Activated CD8-positive, alpha-beta T cell treated with anti-CD3 and anti-CD28 coated beads for 36 hours (primary cell): ENCODE measurements at regions of chr12 and their contacts with region 1.

Region 1: GRCh38 chr12:49358483-49359141 is 8.7 kb upstream of the SPATS2 start:
- DNase-seq: peak; percentile 80
- ATAC-seq: peak; percentile 98
- H3K4me3 Mint-ChIP-seq: no peak overlapping the region
- H3K27ac Mint-ChIP-seq: no peak overlapping the region
- H3K4me1 Mint-ChIP-seq: peaks cover 2% of the 10 kb centered on the region
- H3K27me3 Mint-ChIP-seq: peaks cover 12% of the 10 kb centered on the region
- CTCF ChIP-seq: peak; percentile 90

Region 2: GRCh38 chr12:49144384-49144783 is 214.2 kb before region 1 on chr12:
- CTCF ChIA-PET with region 1: no interaction called
- POLR2A ChIA-PET with region 1: no interaction called
- intact Hi-C with region 1: no loop called
- DNase-seq: no peak
- ATAC-seq: no peak
- H3K4me3 Mint-ChIP-seq: no peak overlapping the region
- H3K27ac Mint-ChIP-seq: no peak overlapping the region
- H3K4me1 Mint-ChIP-seq: peaks cover 3% of the 10 kb centered on the region
- H3K27me3 Mint-ChIP-seq: no peaks in the 10 kb centered on the region
- CTCF ChIP-seq: no peak

Region 3: DNA sequence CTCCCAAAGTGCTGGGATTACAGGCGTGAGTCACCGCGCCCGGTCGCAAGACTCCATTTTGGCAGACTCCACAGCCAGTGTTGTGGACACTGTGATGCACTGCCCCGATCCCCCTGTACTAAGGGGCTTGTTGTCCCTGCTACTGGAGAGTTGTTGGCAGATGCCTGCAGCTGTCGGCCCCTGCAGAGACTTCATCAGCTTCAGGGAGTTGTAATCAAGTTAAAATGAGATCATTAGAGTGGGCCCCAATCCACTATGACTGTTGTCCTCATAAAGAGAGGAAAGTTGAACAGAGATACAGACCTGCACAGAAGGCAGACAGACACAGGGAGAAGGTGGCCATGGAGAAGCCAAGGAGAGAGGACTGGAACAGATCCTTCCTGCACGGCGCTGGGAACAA is 146.0 kb before region 1 on chr12:
- CTCF ChIA-PET with region 1: no interaction called
- POLR2A ChIA-PET with region 1: no interaction called
- intact Hi-C with region 1: no loop called
- DNase-seq: no peak
- ATAC-seq: no peak
- H3K4me3 Mint-ChIP-seq: no peak overlapping the region
- H3K27ac Mint-ChIP-seq: no peak overlapping the region
- H3K4me1 Mint-ChIP-seq: no peaks in the 10 kb centered on the region
- H3K27me3 Mint-ChIP-seq: peaks cover 2% of the 10 kb centered on the region
- CTCF ChIP-seq: no peak

Region 4: DNA sequence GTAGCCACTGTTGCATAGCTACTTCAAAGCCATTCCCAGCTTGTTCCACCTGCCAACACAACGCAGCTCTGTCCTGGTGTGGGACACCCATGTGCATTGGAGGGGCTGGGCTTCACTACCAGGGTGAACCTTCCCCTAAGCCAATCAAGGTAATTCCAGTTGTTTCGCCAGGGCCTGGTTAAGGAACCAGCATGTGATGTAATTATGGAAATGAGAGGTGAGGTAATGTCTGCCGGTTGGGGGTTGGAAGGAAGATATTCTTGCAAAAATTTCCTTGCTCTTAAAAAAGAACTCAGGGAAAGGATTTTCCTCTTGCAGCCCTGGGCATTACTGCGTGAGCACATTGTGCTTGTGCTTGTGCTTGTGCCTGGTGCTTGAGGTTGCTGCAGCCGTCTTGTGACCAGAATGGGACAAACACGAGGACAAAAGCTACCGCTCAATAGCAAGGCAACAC is 78.9 kb before region 1 on chr12:
- CTCF ChIA-PET with region 1: interaction called, 11 read pairs
- POLR2A ChIA-PET with region 1: no interaction called
- intact Hi-C with region 1: no loop called
- DNase-seq: no peak
- ATAC-seq: no peak
- H3K4me3 Mint-ChIP-seq: no peak overlapping the region
- H3K27ac Mint-ChIP-seq: no peak overlapping the region
- H3K4me1 Mint-ChIP-seq: no peaks in the 10 kb centered on the region
- H3K27me3 Mint-ChIP-seq: peaks cover 9% of the 10 kb centered on the region
- CTCF ChIP-seq: no peak

Region 5: GRCh38 chr12:49331380-49332222 is 27.0 kb before region 1 on chr12:
- CTCF ChIA-PET with region 1: interaction called, 16 read pairs
- POLR2A ChIA-PET with region 1: no interaction called
- intact Hi-C with region 1: no loop called
- DNase-seq: peak; percentile 36
- ATAC-seq: peak; percentile 58
- H3K4me3 Mint-ChIP-seq: no peak overlapping the region
- H3K27ac Mint-ChIP-seq: no peak overlapping the region
- H3K4me1 Mint-ChIP-seq: peaks cover 3% of the 10 kb centered on the region
- H3K27me3 Mint-ChIP-seq: peaks cover 36% of the 10 kb centered on the region
- CTCF ChIP-seq: peak; percentile 56

Region 6: GRCh38 chr12:49347384-49348237 is 11.0 kb before region 1 on chr12:
- CTCF ChIA-PET with region 1: interaction called, 114 read pairs
- POLR2A ChIA-PET with region 1: no interaction called
- intact Hi-C with region 1: no loop called
- DNase-seq: peak; percentile 75
- ATAC-seq: peak; percentile 59
- H3K4me3 Mint-ChIP-seq: peak overlapping the region; percentile 65
- H3K27ac Mint-ChIP-seq: no peak overlapping the region
- H3K4me1 Mint-ChIP-seq: peaks cover 38% of the 10 kb centered on the region
- H3K27me3 Mint-ChIP-seq: peaks cover 62% of the 10 kb centered on the region
- CTCF ChIP-seq: peak; percentile 100

Region 7: GRCh38 chr12:49420556-49420955 is 61.9 kb after region 1 on chr12:
- CTCF ChIA-PET with region 1: interaction called, 14 read pairs
- POLR2A ChIA-PET with region 1: no interaction called
- intact Hi-C with region 1: no loop called
- DNase-seq: no peak
- ATAC-seq: no peak
- H3K4me3 Mint-ChIP-seq: no peak overlapping the region
- H3K27ac Mint-ChIP-seq: no peak overlapping the region
- H3K4me1 Mint-ChIP-seq: peaks cover 8% of the 10 kb centered on the region
- H3K27me3 Mint-ChIP-seq: no peaks in the 10 kb centered on the region
- CTCF ChIP-seq: no peak

Region 8: DNA sequence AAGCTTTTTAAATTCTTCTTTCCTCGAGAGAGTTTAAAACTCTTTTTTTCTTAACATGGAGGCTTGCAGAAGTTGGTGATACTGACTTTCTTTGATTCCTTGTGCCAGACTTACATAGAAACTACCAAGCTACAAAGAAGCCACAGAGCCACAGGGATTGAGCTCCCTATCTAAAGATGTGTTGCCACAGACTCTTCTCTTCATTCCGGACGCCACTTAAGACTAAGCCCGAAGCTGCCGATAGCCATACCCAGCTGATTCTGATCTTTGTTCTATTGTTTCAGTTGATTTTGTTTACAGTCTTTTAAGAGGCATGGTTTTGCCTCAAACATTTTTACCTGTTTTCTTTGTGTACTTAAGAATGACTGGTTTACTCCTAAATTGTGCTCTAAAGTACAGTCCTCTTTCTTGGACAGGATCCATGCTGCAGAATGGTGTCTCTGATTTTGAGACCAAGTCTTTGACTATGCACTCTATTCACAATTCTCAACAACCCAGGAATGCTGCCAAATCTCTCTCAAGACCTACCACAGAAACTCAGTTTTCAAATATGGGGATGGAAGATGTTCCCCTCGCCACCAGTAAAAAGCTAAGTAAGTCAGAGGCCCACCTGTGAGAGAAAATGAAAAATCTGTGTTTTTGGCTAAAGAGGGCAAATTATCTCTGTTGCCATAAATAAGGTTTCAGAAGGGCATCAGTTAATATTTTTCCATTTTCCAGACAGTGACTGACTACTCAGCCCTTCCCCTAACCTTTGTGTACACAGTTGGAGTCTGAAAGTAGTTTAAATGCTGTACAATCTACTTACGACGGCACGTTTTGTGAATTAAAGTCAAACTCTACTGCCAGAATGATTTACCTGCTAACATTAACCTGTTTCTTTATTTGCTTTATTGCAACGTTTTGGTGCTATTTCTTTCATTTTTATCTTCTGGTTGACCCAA is 138.1 kb after region 1 on chr12:
- CTCF ChIA-PET with region 1: interaction called, 57 read pairs
- POLR2A ChIA-PET with region 1: no interaction called
- intact Hi-C with region 1: no loop called
- DNase-seq: no peak
- ATAC-seq: no peak
- H3K4me3 Mint-ChIP-seq: no peak overlapping the region
- H3K27ac Mint-ChIP-seq: no peak overlapping the region
- H3K4me1 Mint-ChIP-seq: peaks cover 5% of the 10 kb centered on the region
- H3K27me3 Mint-ChIP-seq: no peaks in the 10 kb centered on the region
- CTCF ChIP-seq: no peak

Region 9: DNA sequence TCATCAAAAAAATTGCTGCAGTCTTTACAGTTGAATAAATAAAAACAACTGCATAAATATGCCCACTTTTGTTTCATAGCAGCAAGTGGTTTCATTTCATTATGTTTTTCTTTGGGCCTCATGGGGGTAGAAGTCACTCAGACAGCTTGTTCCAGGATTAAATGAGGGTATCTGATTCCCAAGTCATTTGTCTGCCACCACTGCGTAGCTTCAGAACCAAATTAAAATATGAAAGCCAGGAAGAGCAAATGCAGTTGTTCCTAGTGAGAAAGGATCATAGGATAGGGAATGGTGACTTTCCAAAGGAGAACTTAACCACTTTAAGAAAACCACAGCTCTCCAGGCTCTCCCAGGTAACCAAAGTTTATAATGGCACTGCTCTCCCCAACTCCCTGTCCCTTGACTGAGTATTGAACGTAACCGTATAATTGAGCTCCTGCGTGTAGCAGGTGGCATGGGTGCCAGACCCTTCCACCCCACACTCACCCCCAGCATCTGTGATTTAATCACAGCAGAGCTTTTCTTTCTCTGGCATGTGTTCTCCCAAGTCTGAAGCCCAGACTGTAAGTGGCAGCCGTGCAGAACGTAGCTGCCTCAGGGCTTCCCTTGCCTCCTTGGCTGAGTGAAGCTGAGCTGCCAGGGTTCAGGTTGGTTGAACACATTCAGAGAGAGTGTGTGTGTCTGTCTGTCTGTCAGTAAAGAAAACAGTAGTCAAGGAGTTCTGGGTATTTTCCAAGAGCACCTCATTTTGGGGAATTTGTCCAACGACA is 168.9 kb after region 1 on chr12:
- CTCF ChIA-PET with region 1: interaction called, 34 read pairs
- POLR2A ChIA-PET with region 1: interaction called, 3 read pairs
- intact Hi-C with region 1: no loop called
- DNase-seq: no peak
- ATAC-seq: no peak
- H3K4me3 Mint-ChIP-seq: no peak overlapping the region
- H3K27ac Mint-ChIP-seq: no peak overlapping the region
- H3K4me1 Mint-ChIP-seq: no peaks in the 10 kb centered on the region
- H3K27me3 Mint-ChIP-seq: no peaks in the 10 kb centered on the region
- CTCF ChIP-seq: no peak

Region 10: GRCh38 chr12:49828133-49829091 is 469.8 kb after region 1 on chr12 and contains the start of gene NCKAP5L:
- CTCF ChIA-PET with region 1: no interaction called
- POLR2A ChIA-PET with region 1: no interaction called
- intact Hi-C with region 1: no loop called
- DNase-seq: peak; percentile 97
- ATAC-seq: peak; percentile 99
- H3K4me3 Mint-ChIP-seq: peak within 1 kb of the TSS; percentile 90
- H3K27ac Mint-ChIP-seq: peak within 1 kb of the TSS; percentile 92
- H3K4me1 Mint-ChIP-seq: peaks cover 25% of the 10 kb centered on the region
- H3K27me3 Mint-ChIP-seq: no peaks in the 10 kb centered on the region
- CTCF ChIP-seq: no peak
- total RNA-seq, gene NCKAP5L: 5.5 to 5.7 TPM